Activated CD8-positive, alpha-beta T cell treated with anti-CD3 and anti-CD28 coated beads for 36 hours (primary cell): ENCODE measurements at regions of chr3 and their contacts with region 1.

Region 1: GRCh38 chr3:15636003-15636709 is 34.6 kb downstream of the BTD start:
- DNase-seq: peak; percentile 74
- ATAC-seq: peak; percentile 79
- H3K4me3 Mint-ChIP-seq: peak overlapping the region; percentile 14
- H3K27ac Mint-ChIP-seq: peak overlapping the region; percentile 87
- H3K4me1 Mint-ChIP-seq: peaks cover 69% of the 10 kb centered on the region
- H3K27me3 Mint-ChIP-seq: no peaks in the 10 kb centered on the region
- CTCF ChIP-seq: no peak

Region 2: DNA sequence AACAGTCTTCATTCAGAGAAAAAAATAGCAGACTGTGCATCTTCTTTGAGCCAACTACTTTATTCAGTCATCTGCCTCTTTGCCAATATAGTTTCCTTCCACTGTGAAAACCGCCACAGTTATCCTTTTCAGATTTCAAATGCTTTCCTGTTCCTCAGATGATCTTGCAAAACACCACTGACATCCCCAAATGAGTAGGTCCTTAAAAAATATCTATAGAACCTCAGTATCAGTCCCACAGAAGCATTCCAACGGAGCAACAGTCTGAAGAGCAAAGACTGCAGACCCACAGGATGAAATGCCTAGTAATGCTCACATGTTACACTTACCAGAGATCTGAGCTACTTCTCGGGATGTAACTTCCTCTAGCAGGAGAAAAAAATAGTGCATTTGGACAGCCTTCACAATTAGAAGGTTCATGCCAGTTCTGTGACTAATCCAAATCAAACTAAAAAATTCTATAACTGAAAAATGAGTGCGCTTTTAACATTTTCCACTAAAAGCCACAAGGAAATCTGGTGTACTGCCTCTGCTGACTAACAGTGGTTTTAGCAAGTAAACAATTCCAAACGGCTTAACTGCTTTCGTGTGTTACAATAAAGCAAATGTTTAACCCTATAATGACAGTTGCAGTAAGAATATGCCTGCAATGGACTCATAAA is 161.6 kb after region 1 on chr3 and contains the start of gene ANKRD28:
- CTCF ChIA-PET with region 1: interaction called, 6 read pairs
- POLR2A ChIA-PET with region 1: interaction called, 4 read pairs
- intact Hi-C with region 1: loop called (anchors 5 kb)
- DNase-seq: peak; percentile 21
- ATAC-seq: peak; percentile 66
- H3K4me3 Mint-ChIP-seq: peak within 1 kb of the TSS; percentile 74
- H3K27ac Mint-ChIP-seq: peak within 1 kb of the TSS; percentile 89
- H3K4me1 Mint-ChIP-seq: peaks cover 76% of the 10 kb centered on the region
- H3K27me3 Mint-ChIP-seq: no peaks in the 10 kb centered on the region
- CTCF ChIP-seq: no peak
- total RNA-seq, gene ANKRD28: 32.9 to 35.3 TPM